ENCODE measurements at regions of chr1 and their contacts with region 1.

Region 1: DNA sequence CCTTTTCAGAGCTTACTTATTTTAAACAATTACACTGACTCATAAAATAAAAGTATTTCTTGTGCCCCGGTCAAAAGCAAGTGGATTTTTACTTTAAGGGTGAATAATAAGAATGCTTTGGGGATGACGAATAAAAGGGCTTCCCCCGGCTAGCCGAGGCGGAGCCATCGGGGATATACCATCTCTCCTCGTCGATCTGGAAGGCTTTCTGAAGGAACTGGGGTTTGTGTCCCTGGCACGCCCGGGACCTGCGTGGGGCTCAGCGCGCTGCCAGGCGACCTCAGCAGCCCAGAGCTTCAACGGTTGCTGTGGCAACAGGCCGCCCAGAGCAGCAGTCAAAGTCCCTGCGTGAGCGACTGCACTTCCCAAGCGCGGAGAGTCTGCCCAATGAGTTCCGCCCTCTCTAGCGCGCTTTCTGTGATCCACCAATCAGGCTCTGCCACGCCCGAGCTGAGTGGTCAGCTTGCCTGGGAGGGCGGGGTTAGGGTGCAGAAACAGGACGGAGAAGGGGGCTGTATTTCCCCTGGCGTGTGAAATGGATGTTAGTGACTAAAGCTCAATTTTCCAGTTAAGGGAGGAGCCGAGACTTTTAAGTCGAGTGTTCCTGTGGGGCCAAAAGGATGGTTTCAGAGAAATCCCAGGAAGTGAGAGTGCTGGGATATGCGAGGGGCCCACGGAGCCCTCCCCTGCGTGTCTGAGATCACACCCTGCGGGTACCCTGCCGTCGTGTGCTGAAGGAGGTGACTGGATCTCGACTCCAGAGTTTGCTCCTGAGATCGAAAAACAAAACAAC is 33.0 kb upstream of the MGST3 start:
- DNase-seq: peak; percentile 95
- H3K4me3 Mint-ChIP-seq: peak overlapping the region; percentile 85
- H3K27ac Mint-ChIP-seq: peak overlapping the region; percentile 76
- H3K4me1 Mint-ChIP-seq: peaks cover 34% of the 10 kb centered on the region
- H3K27me3 Mint-ChIP-seq: peaks cover 33% of the 10 kb centered on the region

Region 2: GRCh38 chr1:165367375-165367993 is 230.6 kb before region 1 on chr1:
- CTCF ChIA-PET with region 1: interaction called, 34 read pairs
- POLR2A ChIA-PET with region 1: no interaction called
- DNase-seq: peak; percentile 75
- H3K4me3 Mint-ChIP-seq: no peak overlapping the region
- H3K27ac Mint-ChIP-seq: no peak overlapping the region
- H3K4me1 Mint-ChIP-seq: peaks cover 4% of the 10 kb centered on the region
- H3K27me3 Mint-ChIP-seq: peaks cover 62% of the 10 kb centered on the region

Region 3: GRCh38 chr1:165403835-165404482 is 194.1 kb before region 1 on chr1:
- CTCF ChIA-PET with region 1: interaction called, 25 read pairs
- POLR2A ChIA-PET with region 1: no interaction called
- DNase-seq: peak; percentile 51
- H3K4me3 Mint-ChIP-seq: no peak overlapping the region
- H3K27ac Mint-ChIP-seq: no peak overlapping the region
- H3K4me1 Mint-ChIP-seq: no peaks in the 10 kb centered on the region
- H3K27me3 Mint-ChIP-seq: peaks cover 40% of the 10 kb centered on the region

Region 4: DNA sequence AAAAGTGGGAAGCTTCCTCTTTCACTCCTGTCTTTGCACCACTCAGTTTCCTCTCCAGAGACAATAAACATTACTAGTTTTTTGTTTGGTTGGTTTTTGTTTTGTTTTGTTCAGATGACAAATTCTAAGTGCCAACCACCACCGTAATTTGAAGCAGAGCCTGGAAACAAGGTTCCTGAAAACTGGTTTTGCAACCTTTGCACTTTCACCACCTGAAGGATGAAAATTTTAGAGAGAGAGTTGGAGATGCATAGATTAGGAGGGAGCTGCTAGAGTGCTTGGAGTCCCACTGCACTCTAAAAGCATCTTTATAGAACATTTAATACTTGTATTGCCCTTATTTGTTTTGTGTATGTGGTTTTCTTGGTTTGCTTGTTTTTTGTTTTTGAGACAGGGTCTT is 12.8 kb after region 1 on chr1:
- CTCF ChIA-PET with region 1: interaction called, 12 read pairs
- POLR2A ChIA-PET with region 1: no interaction called
- DNase-seq: no peak
- H3K4me3 Mint-ChIP-seq: no peak overlapping the region
- H3K27ac Mint-ChIP-seq: no peak overlapping the region
- H3K4me1 Mint-ChIP-seq: no peaks in the 10 kb centered on the region
- H3K27me3 Mint-ChIP-seq: peaks cover 30% of the 10 kb centered on the region

Region 5: GRCh38 chr1:165697881-165698760 is 100.0 kb after region 1 on chr1 and contains the start of gene ALDH9A1:
- CTCF ChIA-PET with region 1: interaction called, 13 read pairs
- POLR2A ChIA-PET with region 1: interaction called, 5 read pairs
- DNase-seq: peak; percentile 91
- H3K4me3 Mint-ChIP-seq: peak within 1 kb of the TSS; percentile 97
- H3K27ac Mint-ChIP-seq: peak within 1 kb of the TSS; percentile 98
- H3K4me1 Mint-ChIP-seq: peaks cover 35% of the 10 kb centered on the region
- H3K27me3 Mint-ChIP-seq: peaks cover 1% of the 10 kb centered on the region
- total RNA-seq, gene ALDH9A1: 46.9 to 54.4 TPM

Region 6: DNA sequence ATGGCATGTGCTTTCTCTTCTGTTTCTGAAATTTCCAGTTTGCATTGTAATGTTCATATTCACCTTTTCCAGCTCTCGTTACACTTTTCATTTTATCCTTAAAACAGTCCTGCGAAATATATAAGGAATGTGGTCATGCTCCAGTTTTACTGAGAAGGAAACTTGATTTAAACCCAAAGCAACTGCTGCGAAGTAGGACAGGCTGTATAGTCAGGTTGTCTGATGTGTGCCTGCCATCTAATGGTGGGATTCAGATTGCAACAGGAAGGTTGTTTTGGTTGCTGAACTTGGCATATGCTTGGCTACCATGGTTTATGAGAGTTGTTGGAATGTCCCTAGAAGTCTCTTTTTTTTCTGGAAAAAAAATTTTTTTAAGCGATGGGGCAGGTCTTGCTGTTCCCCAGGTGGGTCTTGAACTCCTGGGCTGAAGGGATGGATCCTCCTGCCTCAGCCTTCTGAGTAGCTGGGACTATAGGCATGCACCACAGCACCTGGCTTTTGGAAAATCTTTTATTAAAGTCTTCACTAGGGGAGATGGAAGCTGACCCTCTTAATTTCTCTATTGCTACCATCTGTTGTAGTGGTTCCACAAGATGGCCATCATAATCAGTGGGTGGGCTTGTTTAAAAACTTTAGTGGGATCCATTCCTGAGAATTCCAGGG is 316.2 kb after region 1 on chr1:
- CTCF ChIA-PET with region 1: interaction called, 85 read pairs
- POLR2A ChIA-PET with region 1: interaction called, 4 read pairs
- DNase-seq: peak; percentile 72
- H3K4me3 Mint-ChIP-seq: no peak overlapping the region
- H3K27ac Mint-ChIP-seq: no peak overlapping the region
- H3K4me1 Mint-ChIP-seq: peaks cover 4% of the 10 kb centered on the region
- H3K27me3 Mint-ChIP-seq: no peaks in the 10 kb centered on the region